HEK293 (cell line): ENCODE measurements at regions of chr5 and their contacts with region 1.

Region 1: GRCh38 chr5:34486160-34486848 is 169.8 kb upstream of the RAI14 start:
- H3K4me3 ChIP-seq: no peak overlapping the region
- H3K27ac ChIP-seq: no peak overlapping the region
- H3K4me1 ChIP-seq: no peaks in the 10 kb centered on the region
- CTCF ChIP-seq: peak; percentile 79

Region 2: DNA sequence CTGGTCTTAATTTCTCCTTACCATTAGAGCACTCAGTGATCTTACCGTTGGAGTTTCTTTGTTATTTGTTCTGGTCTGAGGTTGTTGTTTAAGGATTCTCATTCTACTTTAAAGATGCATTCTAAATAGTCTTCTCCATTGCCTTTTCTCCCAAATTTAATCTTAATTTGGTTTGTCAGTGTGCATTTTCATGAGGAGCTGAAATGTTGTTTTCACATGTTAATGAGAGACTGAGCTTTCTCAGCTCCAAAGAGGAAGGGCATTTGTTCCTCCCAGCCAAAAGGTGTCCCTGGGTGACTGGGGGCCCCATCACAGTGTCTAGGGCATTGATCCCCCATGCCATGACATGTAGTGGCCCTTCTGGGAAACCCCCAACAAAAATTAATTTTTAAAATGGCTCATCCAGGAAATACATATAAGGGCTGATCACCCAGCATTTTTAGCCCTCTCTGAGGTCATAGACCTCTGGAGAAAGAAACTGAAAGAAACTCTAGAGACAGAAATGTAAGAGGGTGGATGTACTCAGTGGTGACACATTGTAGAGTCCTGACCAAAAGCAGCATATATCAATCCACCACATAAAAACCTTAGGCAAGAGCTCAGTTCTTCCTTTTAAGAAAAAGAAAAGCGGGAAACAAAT is 70.6 kb before region 1 on chr5:
- CTCF ChIA-PET with region 1: no interaction called
- POLR2A ChIA-PET with region 1: no interaction called
- H3K4me3 ChIP-seq: no peak overlapping the region
- H3K27ac ChIP-seq: no peak overlapping the region
- H3K4me1 ChIP-seq: no peaks in the 10 kb centered on the region
- CTCF ChIP-seq: no peak

Region 3: DNA sequence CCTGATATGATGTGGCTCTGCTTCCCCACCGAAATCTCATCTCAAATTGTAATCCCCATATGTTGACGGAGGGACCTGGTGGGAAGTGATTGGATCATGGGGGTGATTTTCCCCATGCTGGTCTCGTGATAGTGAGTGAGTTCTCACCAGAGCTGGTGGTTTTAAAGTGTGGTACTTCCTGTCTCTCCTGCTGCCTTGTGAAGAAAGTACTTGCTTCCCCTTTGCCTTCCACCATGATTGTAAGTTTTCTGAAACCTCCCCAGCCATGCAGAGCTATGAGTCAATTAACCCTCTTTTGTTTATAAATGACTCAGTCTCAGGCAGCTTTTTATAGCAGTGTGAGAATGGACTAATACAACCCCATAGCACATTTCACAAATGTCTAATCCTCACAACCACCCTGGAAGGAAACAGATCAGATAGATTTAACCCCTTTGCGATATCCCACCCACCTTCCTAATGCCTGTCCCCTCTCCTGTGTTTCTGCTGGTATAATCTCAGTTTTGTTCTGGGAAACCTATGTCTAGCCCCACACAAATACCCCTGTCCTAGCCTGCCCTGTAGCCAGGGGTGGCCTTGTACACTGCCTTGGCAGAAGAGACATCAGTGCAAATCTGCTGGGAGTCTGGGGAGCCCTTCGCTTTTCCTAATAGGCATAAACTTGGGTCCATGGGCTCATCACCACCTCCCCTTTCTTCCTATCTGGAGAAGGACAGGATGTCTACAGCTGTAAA is 12.9 kb after region 1 on chr5:
- CTCF ChIA-PET with region 1: interaction called, 14 read pairs
- POLR2A ChIA-PET with region 1: no interaction called
- H3K4me3 ChIP-seq: no peak overlapping the region
- H3K27ac ChIP-seq: no peak overlapping the region
- H3K4me1 ChIP-seq: peaks cover 9% of the 10 kb centered on the region
- CTCF ChIP-seq: no peak

Region 4: DNA sequence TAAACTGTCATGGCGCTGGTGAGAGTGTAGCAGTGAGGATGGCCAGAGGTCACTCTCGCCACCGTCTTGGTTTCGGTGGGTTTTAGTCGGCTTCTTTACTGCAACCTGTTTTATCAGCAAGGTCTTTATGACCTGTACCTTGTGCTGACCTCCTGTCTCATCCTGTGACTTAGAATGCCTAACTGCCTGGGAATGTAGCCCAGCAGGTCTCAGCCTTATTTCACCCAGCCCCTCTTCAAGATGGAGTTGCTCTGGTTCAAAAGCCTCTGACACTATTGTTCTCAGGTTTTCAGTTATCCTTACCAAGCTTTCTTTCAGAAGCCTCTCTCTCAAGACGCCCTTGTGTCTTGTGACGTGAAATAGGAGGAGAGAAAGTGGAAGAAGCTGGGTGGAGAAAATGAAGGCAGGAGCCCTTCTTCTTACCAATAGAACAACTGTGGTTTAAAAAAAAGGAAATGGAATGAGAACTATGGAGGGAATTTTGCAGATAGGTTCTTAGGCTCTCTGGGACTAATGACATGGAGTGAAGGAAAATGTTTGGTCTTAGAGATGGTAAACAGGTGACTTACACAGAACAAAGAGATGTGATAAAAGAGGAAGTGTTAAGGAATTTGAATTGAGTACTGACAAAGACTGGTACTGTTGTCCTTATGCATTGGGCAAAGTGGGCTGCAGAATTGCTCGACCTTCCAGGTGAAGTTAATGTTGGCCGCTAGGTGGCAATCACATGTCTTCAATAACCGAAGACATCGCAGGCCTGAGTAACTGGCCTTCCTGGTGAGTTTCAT is 36.5 kb after region 1 on chr5:
- CTCF ChIA-PET with region 1: interaction called, 21 read pairs
- POLR2A ChIA-PET with region 1: no interaction called
- H3K4me3 ChIP-seq: no peak overlapping the region
- H3K27ac ChIP-seq: no peak overlapping the region
- H3K4me1 ChIP-seq: no peaks in the 10 kb centered on the region
- CTCF ChIP-seq: peak; percentile 90

Region 5: DNA sequence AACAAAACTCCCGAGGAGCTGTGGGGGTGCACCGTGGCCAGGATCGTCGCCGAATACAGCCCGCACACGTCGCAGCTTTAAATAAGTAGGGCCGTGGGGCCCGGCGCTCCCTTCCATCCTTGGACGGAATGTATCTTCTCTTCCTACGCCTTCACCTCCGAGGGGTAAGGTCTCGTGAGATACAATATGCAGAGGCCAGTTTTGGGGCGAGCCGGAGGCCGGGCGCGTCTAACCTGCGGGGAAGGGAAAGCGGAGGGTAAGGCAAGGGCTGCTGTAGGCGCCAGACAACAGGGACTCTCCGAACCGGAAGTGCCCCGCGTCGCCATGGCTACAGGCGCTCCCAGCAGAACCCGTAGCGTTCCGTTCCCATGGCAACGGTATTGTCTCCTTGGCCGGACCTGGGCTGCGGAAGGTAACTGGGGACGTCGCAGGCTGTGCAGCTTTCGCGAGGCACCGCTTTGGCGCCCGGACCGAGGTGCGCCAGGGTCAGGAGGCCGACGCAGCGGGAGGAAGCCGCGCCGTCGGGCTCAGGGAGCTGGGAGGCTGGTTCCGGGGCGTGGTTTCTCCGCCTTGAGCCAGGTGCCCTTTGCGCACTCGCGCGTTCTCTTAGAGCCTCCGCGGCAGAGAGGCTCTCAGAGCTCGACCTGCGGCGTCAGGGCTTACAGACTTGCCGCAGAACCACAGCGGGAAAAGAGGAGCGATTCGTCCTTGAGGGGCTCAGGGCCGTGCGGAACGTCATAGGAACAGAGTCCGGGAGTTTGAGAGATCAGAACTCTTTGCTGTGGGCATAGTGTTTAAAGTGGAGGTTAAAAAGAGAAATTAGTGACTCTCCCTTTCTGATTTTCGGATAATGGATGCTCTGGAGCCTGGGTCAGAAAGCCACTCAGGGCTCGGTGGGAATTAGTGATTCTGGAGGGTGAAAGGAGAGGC is 352.7 kb after region 1 on chr5 and contains the start of gene TTC23L:
- CTCF ChIA-PET with region 1: no interaction called
- POLR2A ChIA-PET with region 1: no interaction called
- H3K4me3 ChIP-seq: peak within 1 kb of the TSS; percentile 71
- H3K27ac ChIP-seq: peak within 1 kb of the TSS; percentile 58
- H3K4me1 ChIP-seq: no peaks in the 10 kb centered on the region
- CTCF ChIP-seq: no peak

Region 6: DNA sequence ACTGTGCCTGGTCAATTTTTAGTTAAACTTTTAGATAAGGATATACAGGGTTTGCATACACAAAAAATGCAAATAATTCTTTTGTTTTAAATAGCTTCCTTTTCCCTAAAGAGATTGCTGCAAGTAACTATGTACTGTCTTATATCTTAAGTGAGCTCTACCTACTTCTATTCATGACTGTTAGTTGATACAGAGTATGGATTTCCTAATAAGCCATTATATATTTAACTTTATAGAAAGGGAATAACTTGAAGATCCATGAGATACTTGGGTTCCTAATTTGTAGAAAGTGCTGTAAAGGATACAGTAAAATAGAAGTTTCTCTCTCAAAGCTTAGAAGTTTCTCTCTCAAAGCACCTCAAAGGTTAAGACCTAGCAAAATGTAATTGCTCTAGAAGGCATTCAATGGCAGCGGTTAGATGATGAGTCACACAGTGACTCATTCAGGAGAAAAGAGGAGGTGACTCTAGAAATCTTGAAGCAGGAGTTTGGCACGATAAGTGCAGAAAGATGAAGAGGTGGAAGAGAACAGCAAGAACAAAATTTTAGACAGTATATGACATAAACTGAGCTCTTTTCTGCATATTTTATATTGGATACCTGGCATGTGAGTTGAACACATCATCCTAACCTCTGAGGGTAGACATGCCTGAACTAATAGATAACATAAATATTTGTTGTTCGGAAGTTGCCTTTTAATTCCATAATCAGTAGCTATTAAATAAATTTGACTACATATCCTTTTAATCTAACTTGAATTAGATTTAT is 437.6 kb after region 1 on chr5:
- CTCF ChIA-PET with region 1: interaction called, 10 read pairs
- POLR2A ChIA-PET with region 1: interaction called, 4 read pairs
- H3K4me3 ChIP-seq: no peak overlapping the region; the same call in 1 of the 2 replicates
- H3K27ac ChIP-seq: peak overlapping the region; percentile 38; the same call in 1 of the 2 replicates
- H3K4me1 ChIP-seq: peaks cover 9% of the 10 kb centered on the region
- CTCF ChIP-seq: no peak